Activated T-helper 1 cell treated with anti-CD3 and anti-CD28 coated beads, Interleukin-12 subunit alpha, Interleukin-12 subunit beta, Interleukin-2, Interleukin-4 antibody, amounts not matched to agents 30 ng/mL and 10 ng/mL and 1 ng/mL, durations not matched to agents 14 hours and 24 hours and 36 hours (primary cell): ENCODE measurements at regions of chr7 and their contacts with region 1.

Region 1: DNA sequence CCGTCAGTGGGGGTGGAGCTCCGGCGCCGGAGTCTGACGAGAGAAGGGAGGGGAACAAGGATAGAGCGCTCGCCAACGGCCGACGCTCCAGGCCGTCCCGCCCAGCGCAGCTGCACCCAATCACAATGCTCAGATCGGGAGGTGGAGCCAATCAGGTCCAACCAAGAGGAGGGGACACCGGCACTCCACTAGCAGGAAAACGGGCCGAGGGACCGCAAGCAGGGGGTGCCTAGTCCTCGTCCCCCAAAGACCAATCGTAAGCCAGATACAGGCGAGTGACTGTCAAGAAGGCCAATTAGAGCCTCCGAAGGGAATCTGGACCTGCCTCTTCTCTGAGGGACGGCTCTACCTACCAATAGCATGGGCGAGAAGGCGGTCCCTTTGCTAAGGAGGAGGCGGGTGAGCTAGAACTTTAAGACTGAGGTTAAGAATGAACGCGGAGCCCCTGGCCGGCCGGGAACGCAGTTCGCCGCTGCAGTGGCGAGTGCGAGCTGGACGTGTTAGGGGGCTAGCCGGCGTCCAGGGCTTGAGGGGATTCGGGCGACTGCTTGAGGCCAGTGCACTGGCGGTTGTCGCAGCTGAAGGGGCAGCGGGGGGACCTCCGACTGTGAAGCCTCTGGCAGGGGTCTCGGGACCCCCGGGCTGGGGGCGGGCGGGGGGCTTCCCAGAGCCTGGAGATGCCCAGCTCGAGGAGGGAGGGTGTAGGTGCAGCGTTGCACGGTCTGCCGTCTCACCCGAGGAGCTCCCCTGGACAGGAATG is at the start of gene FBXO24:
- DNase-seq: peak; percentile 100
- H3K4me3 Mint-ChIP-seq: peak within 1 kb of the TSS; percentile 87
- H3K27ac Mint-ChIP-seq: peak within 1 kb of the TSS; percentile 89
- H3K4me1 Mint-ChIP-seq: peaks cover 23% of the 10 kb centered on the region
- H3K27me3 Mint-ChIP-seq: peaks cover 3% of the 10 kb centered on the region
- total RNA-seq, gene FBXO24: 0.27 and 0.41 TPM in 2 replicates

Region 2: GRCh38 chr7:100369105-100369504 is 217.3 kb before region 1 on chr7:
- intact Hi-C with region 1: no loop called
- DNase-seq: no peak
- H3K4me3 Mint-ChIP-seq: no peak overlapping the region
- H3K27ac Mint-ChIP-seq: peak overlapping the region; percentile 40
- H3K4me1 Mint-ChIP-seq: peaks cover 44% of the 10 kb centered on the region
- H3K27me3 Mint-ChIP-seq: no peaks in the 10 kb centered on the region

Region 3: DNA sequence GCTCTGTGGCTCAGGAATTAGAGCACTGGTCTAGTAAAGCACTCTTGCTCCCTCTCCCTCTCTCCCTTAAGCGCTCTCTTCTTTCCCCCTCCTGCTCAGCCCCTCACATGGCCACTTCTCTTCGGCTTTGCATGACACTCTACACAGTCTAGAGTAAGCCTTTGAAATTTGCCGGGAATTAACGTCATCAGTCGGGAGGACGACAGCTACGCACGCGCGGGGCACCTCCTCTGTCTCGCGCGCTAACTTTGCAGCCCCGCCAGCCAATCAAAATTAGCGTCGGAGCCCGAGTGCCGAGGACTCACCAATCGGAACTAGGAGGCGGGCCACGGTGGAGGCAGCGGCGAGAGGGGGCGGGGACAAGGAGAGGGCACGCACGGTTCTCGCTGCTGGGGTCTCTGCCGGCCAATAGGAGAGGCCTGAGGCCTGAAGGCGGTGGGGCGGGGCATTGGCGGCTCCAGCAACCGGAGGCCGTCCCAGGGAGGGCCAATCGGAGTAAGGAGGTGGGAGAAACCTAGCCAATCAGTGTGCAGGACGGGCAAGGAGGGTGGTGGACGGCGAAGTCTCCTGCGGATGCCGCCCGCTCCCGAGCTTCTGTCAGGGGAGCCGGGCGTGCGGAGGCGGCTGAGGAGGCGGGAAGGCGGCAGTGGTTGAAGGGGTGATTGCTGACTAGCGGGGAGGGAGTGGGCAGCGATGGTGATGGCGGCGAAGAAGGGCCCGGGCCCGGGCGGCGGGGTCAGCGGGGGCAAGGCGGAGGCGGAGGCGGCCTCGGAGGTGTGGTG is 47.6 kb before region 1 on chr7 and contains the start of gene AGFG2:
- intact Hi-C with region 1: loop called (anchors 1 kb)
- DNase-seq: peak; percentile 100
- H3K4me3 Mint-ChIP-seq: peak within 1 kb of the TSS; percentile 98
- H3K27ac Mint-ChIP-seq: peak within 1 kb of the TSS; percentile 85
- H3K4me1 Mint-ChIP-seq: peaks cover 44% of the 10 kb centered on the region
- H3K27me3 Mint-ChIP-seq: no peaks in the 10 kb centered on the region
- total RNA-seq, gene AGFG2: 113 and 124 TPM in 2 replicates

Region 4: GRCh38 chr7:100604028-100604975 is 17.9 kb after region 1 on chr7:
- intact Hi-C with region 1: loop called (anchors 1 kb)
- DNase-seq: peak; percentile 61
- H3K4me3 Mint-ChIP-seq: peak overlapping the region; percentile 81
- H3K27ac Mint-ChIP-seq: peak overlapping the region; percentile 84
- H3K4me1 Mint-ChIP-seq: peaks cover 15% of the 10 kb centered on the region
- H3K27me3 Mint-ChIP-seq: peaks cover 13% of the 10 kb centered on the region

Region 5: GRCh38 chr7:100632951-100633717 is 46.7 kb after region 1 on chr7:
- intact Hi-C with region 1: loop called (anchors 1 kb)
- DNase-seq: peak; percentile 57
- H3K4me3 Mint-ChIP-seq: peak overlapping the region; percentile 92
- H3K27ac Mint-ChIP-seq: peak overlapping the region; percentile 92
- H3K4me1 Mint-ChIP-seq: peaks cover 21% of the 10 kb centered on the region
- H3K27me3 Mint-ChIP-seq: no peaks in the 10 kb centered on the region

Region 6: GRCh38 chr7:100705753-100706671 is 119.6 kb after region 1 on chr7 and contains the start of gene POP7:
- intact Hi-C with region 1: loop called (anchors 1 kb)
- DNase-seq: peak; percentile 99
- H3K4me3 Mint-ChIP-seq: peak within 1 kb of the TSS; percentile 98
- H3K27ac Mint-ChIP-seq: peak within 1 kb of the TSS; percentile 98
- H3K4me1 Mint-ChIP-seq: peaks cover 7% of the 10 kb centered on the region
- H3K27me3 Mint-ChIP-seq: peaks cover 13% of the 10 kb centered on the region
- total RNA-seq, gene POP7: 82.7 and 84.4 TPM in 2 replicates